A549 (cell line): ENCODE measurements at regions of chr2 and their contacts with region 1.

Region 1: GRCh38 chr2:27723372-27724144 is 48.0 kb upstream of the MRPL33 start:
- DNase-seq: peak; percentile 83 to 92
- ATAC-seq: peak; percentile 51 to 77
- H3K4me3 ChIP-seq: no peak overlapping the region
- H3K27ac ChIP-seq: peak overlapping the region; percentile 93 to 98
- H3K4me1 ChIP-seq: peaks cover 65% of the 10 kb centered on the region
- CTCF ChIP-seq: peak; percentile 78
- EP300 ChIP-seq: peak; percentile 36 to 62; a peak in 2 of 5 replicates
- POLR2A ChIP-seq: no peak
- RAD21 ChIP-seq: peak; percentile 82 to 86

Region 2: DNA sequence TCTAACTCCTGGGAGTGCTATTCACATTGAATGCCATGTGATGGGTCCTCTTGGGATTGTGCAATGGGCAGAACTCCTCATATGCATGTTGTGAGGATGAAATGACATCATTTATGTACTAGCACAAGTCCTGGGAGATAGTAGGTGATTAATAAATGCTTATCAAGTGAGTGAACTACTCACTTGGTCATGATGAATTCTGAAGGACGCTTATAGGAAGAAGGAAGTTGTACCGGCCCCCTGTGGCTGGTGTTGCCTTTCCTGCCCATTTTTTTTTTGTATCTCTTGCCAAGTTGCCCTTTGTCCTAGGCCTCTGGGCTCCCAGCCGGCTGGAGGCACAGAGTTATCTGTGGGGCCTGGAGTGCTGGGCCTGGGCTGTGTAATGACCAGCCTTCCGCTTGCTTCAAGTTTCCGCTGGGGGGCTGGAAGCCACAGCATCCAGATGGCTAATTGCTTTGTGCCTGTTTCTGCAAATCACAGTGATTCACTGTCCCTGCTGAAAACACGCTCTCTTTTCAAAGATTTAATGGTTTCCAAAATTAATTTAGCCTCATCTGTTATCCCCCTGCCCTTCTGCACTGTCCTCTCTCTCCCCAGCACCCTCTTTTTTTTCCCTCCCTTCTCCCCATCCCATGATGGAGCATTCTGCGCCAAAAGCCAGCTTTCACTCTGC is 14.3 kb after region 1 on chr2:
- CTCF ChIA-PET with region 1: interaction called, 34 read pairs
- POLR2A ChIA-PET with region 1: no interaction called
- DNase-seq: peak in 1 of 2 experiments; percentile 62
- ATAC-seq: peak; percentile 68 to 75
- H3K4me3 ChIP-seq: no peak overlapping the region
- H3K27ac ChIP-seq: peak overlapping the region; percentile 56 to 60; a peak in 5 of 6 replicates
- H3K4me1 ChIP-seq: peaks cover 17% of the 10 kb centered on the region
- CTCF ChIP-seq: no peak
- EP300 ChIP-seq: no peak
- POLR2A ChIP-seq: no peak
- RAD21 ChIP-seq: no peak

Region 3: DNA sequence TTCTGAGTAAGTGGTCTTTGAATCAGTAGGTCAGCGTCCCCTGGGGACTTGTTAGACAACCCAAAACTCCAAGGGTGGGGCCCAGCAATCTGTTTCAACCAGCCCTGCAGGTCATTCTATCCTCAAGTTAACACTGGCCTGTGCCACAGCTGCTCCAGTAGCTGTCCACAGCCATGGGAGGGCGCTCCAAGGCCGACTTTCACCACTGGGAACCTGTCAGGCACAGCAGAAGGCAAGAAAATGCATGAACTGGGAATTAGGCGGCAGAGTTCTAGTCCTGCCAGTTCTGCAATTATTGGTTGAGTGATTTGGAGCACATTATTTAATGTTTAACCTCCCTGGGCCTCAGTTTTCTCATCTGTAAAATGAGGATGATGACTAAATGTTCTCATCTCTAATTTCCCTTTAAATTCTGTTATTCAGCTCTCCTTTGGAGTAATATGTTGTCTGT is 30.6 kb after region 1 on chr2:
- CTCF ChIA-PET with region 1: interaction called, 56 read pairs
- POLR2A ChIA-PET with region 1: interaction called, 5 read pairs
- DNase-seq: peak; percentile 53 to 85
- ATAC-seq: peak; percentile 97 to 99
- H3K4me3 ChIP-seq: no peak overlapping the region
- H3K27ac ChIP-seq: peak overlapping the region; percentile 74 to 82
- H3K4me1 ChIP-seq: peaks cover 26% of the 10 kb centered on the region
- CTCF ChIP-seq: peak; percentile 96
- EP300 ChIP-seq: no peak
- POLR2A ChIP-seq: no peak
- RAD21 ChIP-seq: peak; percentile 98 to 100

Region 4: GRCh38 chr2:27765621-27766269 is 42.2 kb after region 1 on chr2:
- CTCF ChIA-PET with region 1: interaction called, 11 read pairs
- POLR2A ChIA-PET with region 1: no interaction called
- DNase-seq: peak in 1 of 2 experiments; percentile 37
- ATAC-seq: peak; percentile 55 to 57; a peak in 5 of 6 replicates
- H3K4me3 ChIP-seq: no peak overlapping the region
- H3K27ac ChIP-seq: peak overlapping the region; percentile 62 to 69
- H3K4me1 ChIP-seq: peaks cover 27% of the 10 kb centered on the region
- CTCF ChIP-seq: no peak
- EP300 ChIP-seq: no peak
- POLR2A ChIP-seq: no peak
- RAD21 ChIP-seq: no peak

Region 5: GRCh38 chr2:27771548-27772335 is 48.2 kb after region 1 on chr2 and contains the start of gene MRPL33:
- CTCF ChIA-PET with region 1: interaction called, 13 read pairs
- POLR2A ChIA-PET with region 1: interaction called, 5 read pairs
- DNase-seq: peak; percentile 95 to 99
- ATAC-seq: peak; percentile 98 to 99
- H3K4me3 ChIP-seq: peak within 1 kb of the TSS; percentile 92
- H3K27ac ChIP-seq: peak within 1 kb of the TSS; percentile 93 to 94
- H3K4me1 ChIP-seq: peaks cover 34% of the 10 kb centered on the region
- CTCF ChIP-seq: no peak
- EP300 ChIP-seq: no peak
- POLR2A ChIP-seq: peak; percentile 74
- RAD21 ChIP-seq: 0 out of 5 replicates have a peak, but pooled peaks of 1 of the 2 experiments have one; percentile 3
- polyA plus RNA-seq, gene MRPL33: 171 and 287 TPM in 2 replicates

Region 6: DNA sequence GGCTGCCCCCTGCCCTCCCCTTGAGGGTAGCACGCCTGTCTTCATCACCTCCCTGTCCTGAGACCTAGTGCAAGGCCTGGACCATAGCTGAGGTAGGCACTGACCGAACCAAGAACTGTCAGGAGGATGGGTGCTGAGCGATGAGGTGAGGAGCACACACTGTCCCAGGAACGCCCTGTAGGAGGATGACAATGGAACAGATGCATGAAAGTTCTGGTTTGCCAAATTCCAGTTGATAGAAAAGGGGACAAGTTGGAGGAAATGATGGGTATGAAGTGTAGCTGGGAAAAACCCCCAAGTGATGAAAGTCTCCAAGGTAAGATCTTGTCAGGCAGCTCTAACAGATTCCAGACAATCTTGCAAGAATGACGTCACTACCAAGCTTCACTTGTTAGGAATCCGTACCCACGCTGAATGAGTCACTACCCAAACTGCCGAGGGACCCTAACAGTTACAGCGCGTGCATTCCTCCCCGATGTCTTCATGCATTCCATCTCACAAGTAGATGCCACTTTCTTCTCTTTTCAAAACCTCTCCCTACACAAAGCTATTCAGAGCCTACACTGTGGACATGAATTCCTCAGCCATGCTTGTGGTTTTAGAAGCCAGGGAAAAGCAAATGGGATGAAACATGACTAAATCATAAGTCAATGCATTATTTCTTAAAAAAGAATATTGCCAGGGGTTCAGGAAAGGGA is 75.5 kb after region 1 on chr2:
- CTCF ChIA-PET with region 1: interaction called, 15 read pairs
- POLR2A ChIA-PET with region 1: interaction called, 6 read pairs
- DNase-seq: peak; percentile 94 to 99
- ATAC-seq: peak; percentile 95 to 96
- H3K4me3 ChIP-seq: no peak overlapping the region
- H3K27ac ChIP-seq: peak overlapping the region; percentile 89 to 97
- H3K4me1 ChIP-seq: peaks cover 56% of the 10 kb centered on the region
- CTCF ChIP-seq: no peak
- EP300 ChIP-seq: peak; percentile 97 to 99
- POLR2A ChIP-seq: no peak
- RAD21 ChIP-seq: peak; percentile 49 to 61; a peak in 4 of 5 replicates